GM18951 (cell line): ENCODE measurements at regions of chr18 and their contacts with region 1.

Region 1: DNA sequence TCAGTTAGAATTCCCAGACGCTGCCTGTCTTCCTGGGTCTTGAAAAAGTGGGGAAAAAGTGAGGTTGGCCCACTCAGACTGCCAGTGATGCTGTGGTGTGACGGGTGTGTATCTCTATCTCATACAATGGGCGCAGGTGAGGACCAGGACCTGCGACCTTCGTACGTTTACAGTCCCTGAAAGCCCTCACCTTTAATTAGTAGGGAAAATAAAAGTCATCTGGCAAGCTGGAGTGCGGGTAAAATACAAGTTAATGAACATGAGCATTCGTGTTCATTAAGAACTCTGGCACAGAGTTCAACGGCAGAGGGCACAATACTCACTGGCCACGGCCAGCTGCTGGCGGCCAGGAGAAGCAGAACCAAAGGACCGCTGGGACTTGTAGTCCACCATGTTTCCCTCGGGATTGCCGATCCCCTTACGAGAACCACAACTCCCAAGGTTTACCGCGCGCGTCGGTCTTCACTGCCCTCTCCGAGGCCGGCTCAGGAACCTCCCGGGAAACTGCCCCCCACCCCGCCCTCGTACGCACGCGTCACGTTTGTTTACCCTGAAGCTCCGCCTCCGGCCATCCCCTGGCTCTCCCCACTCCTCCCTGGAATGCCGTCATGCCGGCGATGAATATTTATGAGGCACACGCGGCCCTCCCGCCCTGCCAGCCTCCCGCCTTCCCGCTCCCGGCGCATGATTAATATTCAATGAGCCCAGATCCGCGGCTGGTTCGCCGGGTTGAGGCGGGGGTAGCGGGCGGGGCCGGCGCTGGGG is 488 bp upstream of the PHLPP1 start:
- POLR2A ChIP-seq: peak; percentile 43

Region 2: GRCh38 chr18:62957885-62958472 is 243.1 kb after region 1 on chr18:
- in situ Hi-C with region 1: loop called (anchors 10 kb)
- POLR2A ChIP-seq: no peak

Region 3: GRCh38 chr18:63284827-63285733 is 570.2 kb after region 1 on chr18:
- in situ Hi-C with region 1: no loop called
- POLR2A ChIP-seq: peak; percentile 58

Region 4: GRCh38 chr18:63339920-63340484 is 625.1 kb after region 1 on chr18:
- in situ Hi-C with region 1: loop called (anchors 25 kb)
- POLR2A ChIP-seq: no peak

Region 5: GRCh38 chr18:63439334-63439733 is 724.5 kb after region 1 on chr18:
- in situ Hi-C with region 1: loop called (anchors 25 kb)
- POLR2A ChIP-seq: no peak